ENCODE measurements at regions of chr7 and their contacts with region 1.

Region 1: DNA sequence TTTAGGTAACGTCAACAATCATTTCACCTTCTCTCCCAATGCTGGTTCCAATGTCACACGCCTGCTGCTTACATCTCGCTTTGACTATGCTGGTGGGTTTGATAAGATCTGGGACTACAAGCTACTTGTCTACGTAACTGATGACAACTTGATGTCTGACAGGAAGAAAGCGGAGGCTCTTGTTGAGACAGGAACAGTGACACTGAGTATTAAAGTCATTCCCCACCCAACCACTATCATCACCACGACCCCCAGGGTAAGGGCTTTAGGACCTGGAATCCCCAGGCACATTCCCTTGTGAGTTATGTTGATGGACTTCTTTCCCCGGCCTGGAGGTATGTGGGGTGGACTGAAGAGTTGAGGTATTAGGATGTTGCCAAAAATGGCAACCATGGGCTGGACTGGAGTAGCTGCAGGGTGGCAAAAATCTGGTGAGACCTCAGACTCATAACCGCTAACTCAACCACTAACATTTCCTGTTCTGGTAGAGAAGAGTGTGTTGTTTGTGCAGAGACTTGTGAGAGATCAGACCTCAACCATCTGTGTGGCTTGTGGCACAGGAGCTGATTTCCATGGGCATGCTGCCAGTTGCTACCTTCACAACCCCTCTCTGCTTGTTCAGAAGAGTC is 59.2 kb downstream of the CDHR3 start:
- DNase-seq: peak; percentile 66 to 93 (median 80)
- ATAC-seq: peak; percentile 83
- H3K4me3 ChIP-seq: peak overlapping the region; percentile 25
- H3K4me3 Mint-ChIP-seq: peak overlapping the region; percentile 26
- H3K27ac ChIP-seq: peak overlapping the region; percentile 80 to 85
- H3K27ac Mint-ChIP-seq: peak overlapping the region; percentile 98
- H3K4me1 ChIP-seq: peaks cover 70% of the 10 kb centered on the region
- H3K4me1 Mint-ChIP-seq: peaks cover 81% of the 10 kb centered on the region
- H3K27me3 ChIP-seq: no peaks in the 10 kb centered on the region
- H3K27me3 Mint-ChIP-seq: no peaks in the 10 kb centered on the region
- CTCF ChIP-seq: no peak

Region 2: GRCh38 chr7:105678811-105679495 is 343.4 kb before region 1 on chr7:
- CTCF ChIA-PET with region 1: no interaction called
- POLR2A ChIA-PET with region 1: no interaction called
- intact Hi-C with region 1: loop called in 1 of 2 experiments (anchors 5 kb)
- DNase-seq: peak in 6 of 14 experiments; percentile 12 to 60 (median 50)
- ATAC-seq: peak; percentile 2
- H3K4me3 ChIP-seq: peak overlapping the region; percentile 55
- H3K4me3 Mint-ChIP-seq: peak overlapping the region; percentile 88
- H3K27ac ChIP-seq: peak overlapping the region; percentile 39 to 88
- H3K27ac Mint-ChIP-seq: peak overlapping the region; percentile 98
- H3K4me1 ChIP-seq: peaks cover 66% of the 10 kb centered on the region
- H3K4me1 Mint-ChIP-seq: peaks cover 88% of the 10 kb centered on the region
- H3K27me3 ChIP-seq: no peaks in the 10 kb centered on the region
- H3K27me3 Mint-ChIP-seq: no peaks in the 10 kb centered on the region
- CTCF ChIP-seq: no peak

Region 3: DNA sequence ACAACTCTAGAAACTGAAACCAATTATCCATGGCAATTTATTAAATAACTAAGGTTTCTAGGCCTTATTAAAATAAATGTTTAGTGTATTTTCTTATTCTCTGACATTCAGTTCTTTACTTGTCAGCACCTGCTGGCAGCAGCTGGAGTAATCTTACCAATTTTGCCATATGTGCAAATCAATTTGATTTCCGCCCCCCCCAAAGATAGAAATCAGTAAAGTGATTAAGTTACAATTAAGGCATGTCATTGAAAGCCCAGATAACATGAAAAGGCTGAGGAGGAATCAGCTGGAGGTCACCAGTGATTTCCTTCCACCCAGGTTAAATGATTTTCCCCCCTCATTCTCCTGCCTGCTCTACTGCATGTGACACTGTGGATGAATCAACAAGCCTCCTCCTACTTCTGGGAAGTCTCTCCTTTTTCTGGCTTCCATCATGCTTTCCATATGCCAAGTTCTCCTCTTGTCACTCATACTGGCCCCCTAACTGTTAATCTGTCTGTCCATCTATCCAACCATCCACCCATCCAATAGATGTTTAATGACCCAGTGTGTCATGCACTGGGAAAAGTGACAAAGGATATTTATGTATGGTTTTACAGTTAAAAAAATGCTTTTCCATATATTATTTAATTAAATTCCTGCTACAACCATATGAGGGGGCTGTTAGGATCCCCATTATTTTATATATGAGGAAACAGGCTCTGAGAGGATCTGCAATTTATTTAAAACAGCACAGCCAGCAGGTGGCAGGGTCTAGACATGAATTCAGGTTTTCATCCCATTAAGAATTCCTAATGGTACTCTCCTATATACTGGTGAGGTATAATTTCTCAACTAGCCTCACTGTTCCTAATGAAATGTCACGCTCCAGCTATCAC is 262.4 kb before region 1 on chr7:
- CTCF ChIA-PET with region 1: interaction called, 3 read pairs
- POLR2A ChIA-PET with region 1: interaction called, 16 read pairs
- intact Hi-C with region 1: loop called in 1 of 2 experiments (anchors 1 kb)
- DNase-seq: peak in 7 of 14 experiments; percentile 8 to 54 (median 49)
- ATAC-seq: peak; percentile 25
- H3K4me3 ChIP-seq: no peak overlapping the region
- H3K4me3 Mint-ChIP-seq: no peak overlapping the region
- H3K27ac ChIP-seq: no peak overlapping the region
- H3K27ac Mint-ChIP-seq: peak overlapping the region; percentile 45
- H3K4me1 ChIP-seq: peaks cover 45% of the 10 kb centered on the region
- H3K4me1 Mint-ChIP-seq: peaks cover 35% of the 10 kb centered on the region
- H3K27me3 ChIP-seq: no peaks in the 10 kb centered on the region
- H3K27me3 Mint-ChIP-seq: no peaks in the 10 kb centered on the region
- CTCF ChIP-seq: peak; percentile 76

Region 4: DNA sequence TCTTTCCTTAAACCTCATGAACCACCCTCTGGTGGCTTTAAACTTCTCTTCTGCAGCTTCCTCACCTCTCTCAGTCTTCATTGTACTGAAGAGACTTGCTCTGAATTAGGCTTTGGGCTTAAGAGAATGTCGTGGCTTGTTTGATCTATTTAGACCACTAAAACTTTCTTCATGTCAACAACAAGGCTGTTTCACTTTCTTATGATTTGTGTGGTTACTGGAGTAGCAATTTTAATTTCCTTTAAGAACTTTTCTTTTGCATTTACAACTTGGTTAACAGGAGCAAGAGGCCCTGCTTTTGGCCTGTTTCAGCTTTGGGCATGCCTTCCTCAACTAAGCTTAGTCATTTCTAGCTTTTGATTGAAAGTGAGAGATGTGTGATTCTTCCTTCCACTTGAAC is 97.4 kb before region 1 on chr7:
- CTCF ChIA-PET with region 1: no interaction called
- POLR2A ChIA-PET with region 1: interaction called, 16 read pairs
- intact Hi-C with region 1: loop called in 1 of 2 experiments (anchors 1 kb)
- DNase-seq: peak in 6 of 14 experiments; percentile 2 to 66 (median 38)
- ATAC-seq: peak; percentile 87
- H3K4me3 ChIP-seq: no peak overlapping the region
- H3K4me3 Mint-ChIP-seq: peak overlapping the region; percentile 22
- H3K27ac ChIP-seq: no peak overlapping the region
- H3K27ac Mint-ChIP-seq: peak overlapping the region; percentile 87
- H3K4me1 ChIP-seq: peaks cover 16% of the 10 kb centered on the region
- H3K4me1 Mint-ChIP-seq: peaks cover 41% of the 10 kb centered on the region
- H3K27me3 ChIP-seq: no peaks in the 10 kb centered on the region
- H3K27me3 Mint-ChIP-seq: no peaks in the 10 kb centered on the region
- CTCF ChIP-seq: no peak

Region 5: DNA sequence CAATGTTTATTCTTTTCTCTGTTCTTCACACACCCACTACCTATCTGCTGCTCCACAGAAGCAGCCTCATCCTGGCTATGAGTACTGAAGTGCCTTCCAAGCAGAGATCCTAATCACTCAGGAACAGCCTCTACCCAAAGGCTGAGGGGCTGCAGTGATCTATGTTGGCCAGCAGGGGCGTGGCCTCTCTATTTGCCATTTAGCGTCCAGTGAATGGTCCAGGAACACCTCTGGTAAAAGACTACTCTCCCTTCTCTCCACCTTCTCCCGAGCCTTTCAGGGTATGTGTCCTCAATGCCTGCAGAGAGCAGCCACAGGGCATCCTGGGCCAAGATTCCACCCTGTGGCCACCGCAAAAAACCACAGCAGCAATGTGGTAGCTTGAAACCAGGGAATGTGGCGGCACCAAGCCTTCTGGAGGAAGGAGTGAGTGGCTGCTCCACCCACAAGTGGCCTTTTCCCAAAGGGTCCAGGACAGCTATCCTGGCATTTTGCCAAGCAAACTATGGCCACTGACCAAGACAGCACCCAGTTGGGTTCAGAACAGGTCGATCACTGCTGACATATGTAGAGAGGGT is 18.9 kb after region 1 on chr7:
- CTCF ChIA-PET with region 1: interaction called, 9 read pairs
- POLR2A ChIA-PET with region 1: interaction called, 30 read pairs
- intact Hi-C with region 1: loop called (anchors 1 to 2 kb)
- DNase-seq: peak in 5 of 14 experiments; percentile 23 to 61 (median 50)
- ATAC-seq: peak; percentile 22
- H3K4me3 ChIP-seq: no peak overlapping the region
- H3K4me3 Mint-ChIP-seq: no peak overlapping the region
- H3K27ac ChIP-seq: no peak overlapping the region
- H3K27ac Mint-ChIP-seq: peak overlapping the region; percentile 67
- H3K4me1 ChIP-seq: peaks cover 29% of the 10 kb centered on the region
- H3K4me1 Mint-ChIP-seq: peaks cover 50% of the 10 kb centered on the region
- H3K27me3 ChIP-seq: peaks cover 0 to 4% of the 10 kb centered on the region in 2 experiments
- H3K27me3 Mint-ChIP-seq: peaks cover 4% of the 10 kb centered on the region
- CTCF ChIP-seq: peak; percentile 57

Region 6: DNA sequence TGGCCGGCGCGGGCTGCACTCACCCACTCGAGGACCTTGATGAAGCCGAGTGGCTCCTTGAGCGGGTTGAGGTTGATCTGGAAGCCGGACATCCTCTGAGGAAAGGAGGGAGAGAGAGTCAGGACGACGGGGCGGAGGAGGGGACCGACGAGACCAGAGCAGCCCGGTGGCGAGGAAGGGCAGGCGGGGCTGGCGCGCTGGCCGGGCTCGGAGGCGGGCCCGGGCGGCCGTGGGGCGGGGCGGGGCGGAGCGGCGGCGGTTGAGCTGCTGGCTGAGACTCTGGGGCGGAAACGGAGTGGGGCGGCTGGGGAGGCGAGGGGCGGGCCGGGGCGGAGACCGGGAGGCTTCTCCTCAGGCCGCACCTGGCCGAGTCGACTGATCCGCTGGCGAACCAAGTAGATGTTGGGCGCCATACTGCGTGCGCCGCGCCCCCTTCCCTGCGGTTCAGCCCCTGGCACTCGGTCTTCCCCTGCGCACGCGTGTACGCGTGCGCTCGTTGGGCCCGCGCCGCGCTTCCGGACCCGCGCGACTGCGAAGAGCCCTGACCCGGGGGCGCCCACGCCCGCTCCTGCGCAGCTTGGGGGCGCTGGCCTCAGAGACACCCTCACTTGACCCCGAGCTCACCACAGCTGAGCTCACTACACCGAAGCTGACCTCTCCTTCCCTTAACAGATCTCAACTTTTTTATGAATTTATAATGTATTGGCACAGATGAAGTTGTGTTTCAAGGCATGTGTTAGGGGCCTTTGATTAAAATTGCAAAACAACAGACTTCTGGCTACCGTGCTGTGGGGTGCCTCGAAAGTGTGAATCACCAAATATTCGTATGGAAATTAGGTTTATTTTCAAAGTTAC is 90.0 kb after region 1 on chr7 and contains the start of gene SYPL1:
- CTCF ChIA-PET with region 1: no interaction called
- POLR2A ChIA-PET with region 1: interaction called, 15 read pairs
- intact Hi-C with region 1: no loop called
- DNase-seq: peak; percentile 89 to 98 (median 94)
- ATAC-seq: peak; percentile 84
- H3K4me3 ChIP-seq: peak within 1 kb of the TSS; percentile 73
- H3K4me3 Mint-ChIP-seq: peak within 1 kb of the TSS; percentile 94
- H3K27ac ChIP-seq: peak within 1 kb of the TSS; percentile 81 to 82
- H3K27ac Mint-ChIP-seq: peak within 1 kb of the TSS; percentile 90
- H3K4me1 ChIP-seq: peaks cover 26% of the 10 kb centered on the region
- H3K4me1 Mint-ChIP-seq: peaks cover 78% of the 10 kb centered on the region
- H3K27me3 ChIP-seq: no peaks in the 10 kb centered on the region
- H3K27me3 Mint-ChIP-seq: no peaks in the 10 kb centered on the region
- CTCF ChIP-seq: no peak
- total RNA-seq, gene SYPL1: 51.2 to 53.1 TPM